Mucosa of descending colon (tissue), 3 donors: ENCODE measurements at regions of chrX and their contacts with region 1.

Region 1: GRCh38 chrX:43557792-43558191 is 98.3 kb upstream of the MAOA start:
- DNase-seq: peak in 2 of 3 donors; percentile 50 to 80
- ATAC-seq: peak; percentile 34
- H3K4me3 ChIP-seq: no peak overlapping the region
- H3K4me1 ChIP-seq: peaks cover 5% of the 10 kb centered on the region
- CTCF ChIP-seq: no peak

Region 2: GRCh38 chrX:43349363-43349762 is 208.4 kb before region 1 on chrX:
- intact Hi-C with region 1: loop called in 1 of 2 experiments (anchors 10 kb)
- DNase-seq: peak in 1 of 3 donors; percentile 53
- ATAC-seq: peak; percentile 86
- H3K4me3 ChIP-seq: no peak overlapping the region
- H3K4me1 ChIP-seq: no peaks in the 10 kb centered on the region
- CTCF ChIP-seq: no peak

Region 3: GRCh38 chrX:43474305-43474704 is 83.5 kb before region 1 on chrX:
- intact Hi-C with region 1: no loop called
- DNase-seq: no peak
- ATAC-seq: no peak
- H3K4me3 ChIP-seq: no peak overlapping the region
- H3K4me1 ChIP-seq: no peaks in the 10 kb centered on the region
- CTCF ChIP-seq: no peak

Region 4: DNA sequence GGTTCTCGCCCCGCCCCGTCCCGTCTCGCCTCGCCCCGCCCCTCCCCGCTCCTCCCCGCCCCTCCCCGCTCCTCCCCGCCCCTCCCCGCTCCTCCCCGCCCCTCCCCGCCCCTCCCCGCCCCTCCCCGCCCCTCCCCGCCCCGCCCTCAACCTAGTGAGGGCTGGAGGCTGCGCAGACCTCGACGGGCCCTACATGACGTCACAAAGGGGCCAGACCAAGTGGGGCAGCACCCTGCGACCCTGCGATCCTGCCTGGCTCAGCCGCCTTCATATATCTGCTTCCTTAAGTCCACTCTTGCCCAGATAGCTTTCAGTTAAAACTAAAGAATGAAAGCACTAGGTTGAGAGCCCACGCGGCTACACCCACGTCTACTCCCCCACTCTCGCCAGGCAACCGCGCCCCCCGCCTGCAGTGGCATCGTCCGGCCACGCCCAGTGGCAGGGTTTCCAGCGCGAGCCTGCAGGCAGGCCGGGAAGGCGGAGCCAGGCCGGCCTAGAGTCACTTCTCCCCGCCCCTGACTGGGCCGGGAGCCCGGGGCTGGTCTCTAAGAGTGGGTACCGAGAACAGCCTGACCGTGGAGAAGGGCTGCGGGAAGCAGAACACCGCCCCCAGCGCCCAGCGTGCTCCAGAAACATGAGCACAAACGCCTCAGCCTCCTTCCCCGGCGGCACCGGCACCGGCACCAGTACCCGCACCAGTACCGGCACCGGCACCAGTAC is 96.8 kb after region 1 on chrX:
- intact Hi-C with region 1: loop called in 1 of 2 experiments (anchors 5 kb)
- DNase-seq: peak; percentile 93 to 94 (median 94)
- ATAC-seq: peak; percentile 94
- H3K4me3 ChIP-seq: peak overlapping the region; percentile 44
- H3K4me1 ChIP-seq: no peaks in the 10 kb centered on the region
- CTCF ChIP-seq: no peak

Region 5: GRCh38 chrX:43750248-43750676 is 192.5 kb after region 1 on chrX:
- intact Hi-C with region 1: loop called in 1 of 2 experiments (anchors 10 kb)
- DNase-seq: peak in 1 of 3 donors; percentile 52
- ATAC-seq: peak; percentile 86
- H3K4me3 ChIP-seq: no peak overlapping the region
- H3K4me1 ChIP-seq: peaks cover 2% of the 10 kb centered on the region
- CTCF ChIP-seq: no peak